Endothelial cell of umbilical vein (primary cell): ENCODE measurements at regions of chr3 and their contacts with region 1.

Region 1: DNA sequence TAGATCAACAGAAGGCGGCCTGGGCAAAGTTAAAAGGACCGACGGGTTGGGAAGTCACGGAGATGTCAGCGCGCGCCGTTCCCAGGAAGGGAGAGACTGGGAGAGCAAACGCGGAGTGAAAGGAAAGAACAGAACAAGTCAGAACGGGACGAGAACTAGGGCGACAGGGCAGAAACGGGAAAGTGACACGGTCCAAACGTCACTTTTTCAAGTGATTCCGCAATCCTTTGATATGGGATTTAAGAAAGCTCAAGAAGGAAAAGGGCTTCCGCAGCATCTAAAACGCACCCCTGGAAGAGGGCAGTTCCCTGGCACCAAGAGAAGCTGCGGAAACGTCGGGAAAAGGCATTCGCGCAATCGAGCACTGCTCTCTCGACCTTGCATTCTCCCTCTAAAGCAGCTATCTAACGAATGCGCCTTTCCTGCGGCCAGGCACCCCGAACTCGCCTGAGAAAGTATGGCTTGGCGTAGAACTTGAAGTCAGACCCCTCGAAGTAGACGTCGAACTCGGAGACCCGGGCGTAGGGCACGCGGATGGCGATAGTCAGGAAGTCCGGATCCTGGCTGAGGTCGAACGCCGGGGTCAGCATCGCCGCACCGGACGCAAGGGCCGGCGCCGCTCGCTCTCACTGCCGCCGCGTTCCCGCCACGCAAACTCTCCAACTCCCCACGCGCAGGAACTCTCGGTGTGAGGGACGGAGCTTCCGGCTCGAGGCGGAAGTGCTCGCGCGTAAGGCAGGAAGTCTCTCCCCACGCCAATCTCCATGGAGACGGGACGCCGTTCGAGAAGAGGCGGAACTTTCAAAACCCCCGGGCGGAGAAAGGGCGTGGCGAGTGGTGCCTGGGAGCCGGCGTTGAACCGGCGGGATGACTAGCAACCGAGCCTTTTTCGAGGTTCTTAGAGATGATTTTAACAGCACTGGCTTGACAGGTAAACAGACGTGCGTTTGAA is at the start of gene SHQ1:
- DNase-seq: peak; percentile 93
- H3K4me3 ChIP-seq: peak within 1 kb of the TSS; percentile 46 to 77 (median 76)
- H3K27ac ChIP-seq: peak within 1 kb of the TSS; percentile 4
- H3K4me1 ChIP-seq: peaks cover 16% of the 10 kb centered on the region
- H3K27me3 ChIP-seq: no peaks in the 10 kb centered on the region
- CTCF ChIP-seq: no peak
- POLR2A ChIP-seq: peak; percentile 67
- total RNA-seq, gene SHQ1: 19.7 and 20.6 TPM in 2 replicates

Region 2: GRCh38 chr3:72862314-72863090 is 14.5 kb after region 1 on chr3:
- CTCF ChIA-PET with region 1: interaction called, 14 read pairs
- POLR2A ChIA-PET with region 1: no interaction called
- dilution Hi-C with region 1: no loop called
- intact Hi-C with region 1: no loop called
- DNase-seq: no peak
- H3K4me3 ChIP-seq: no peak overlapping the region
- H3K27ac ChIP-seq: no peak overlapping the region
- H3K4me1 ChIP-seq: no peaks in the 10 kb centered on the region
- H3K27me3 ChIP-seq: peaks cover 2 to 5% of the 10 kb centered on the region in 2 experiments
- CTCF ChIP-seq: no peak
- POLR2A ChIP-seq: no peak

Region 3: DNA sequence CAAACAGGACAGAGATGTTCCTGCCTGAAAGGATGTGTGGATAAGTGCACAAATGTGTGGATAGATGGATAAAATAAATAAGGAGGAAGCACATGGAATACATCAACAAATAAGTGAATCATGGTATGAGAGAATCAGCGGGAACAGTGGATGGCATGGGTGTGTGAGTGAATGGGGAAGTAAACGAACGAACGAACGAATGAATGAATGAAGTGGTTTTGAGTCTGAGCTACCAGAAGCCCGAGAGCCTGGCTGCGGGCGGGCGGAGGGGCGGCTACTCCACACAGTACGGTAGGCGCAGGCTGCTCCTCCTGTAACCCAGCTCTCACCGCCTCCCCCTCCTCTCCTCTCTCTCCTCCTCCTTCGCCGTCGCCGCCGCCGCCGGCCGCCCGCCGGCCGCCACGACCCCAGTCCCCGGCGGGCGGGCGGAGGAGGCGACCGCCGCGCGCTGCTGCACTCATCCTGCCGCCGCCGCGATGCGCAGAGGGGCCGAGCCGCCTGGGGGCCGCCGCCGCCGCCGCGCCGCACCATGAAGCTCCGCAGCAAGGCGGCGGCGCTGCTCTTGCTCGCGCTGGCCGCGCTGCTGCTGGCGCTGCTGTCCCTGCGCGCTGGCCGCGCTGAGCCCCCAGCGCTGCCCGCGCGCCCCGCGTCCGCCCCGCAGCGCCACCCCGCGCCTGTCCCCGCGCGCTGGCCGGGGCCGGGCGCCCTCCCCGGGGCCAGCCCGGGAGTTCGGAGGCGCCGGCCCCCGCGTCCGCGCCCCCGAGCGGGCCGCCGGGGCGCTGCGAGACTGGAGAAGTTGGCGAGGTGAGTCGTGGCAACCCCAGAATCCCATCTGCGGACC is 39.9 kb after region 1 on chr3 and contains the start of gene GXYLT2:
- CTCF ChIA-PET with region 1: interaction called, 14 read pairs
- POLR2A ChIA-PET with region 1: no interaction called
- dilution Hi-C with region 1: no loop called
- intact Hi-C with region 1: no loop called
- DNase-seq: peak; percentile 34
- H3K4me3 ChIP-seq: peak within 1 kb of the TSS in 2 of 3 experiments; percentile 11 to 12
- H3K27ac ChIP-seq: no peak within 1 kb of the TSS
- H3K4me1 ChIP-seq: peaks cover 5% of the 10 kb centered on the region
- H3K27me3 ChIP-seq: peaks cover 38 to 49% of the 10 kb centered on the region in 2 experiments
- CTCF ChIP-seq: no peak
- POLR2A ChIP-seq: no peak
- total RNA-seq, gene GXYLT2: 0.14 and 0.24 TPM in 2 replicates

Region 4: DNA sequence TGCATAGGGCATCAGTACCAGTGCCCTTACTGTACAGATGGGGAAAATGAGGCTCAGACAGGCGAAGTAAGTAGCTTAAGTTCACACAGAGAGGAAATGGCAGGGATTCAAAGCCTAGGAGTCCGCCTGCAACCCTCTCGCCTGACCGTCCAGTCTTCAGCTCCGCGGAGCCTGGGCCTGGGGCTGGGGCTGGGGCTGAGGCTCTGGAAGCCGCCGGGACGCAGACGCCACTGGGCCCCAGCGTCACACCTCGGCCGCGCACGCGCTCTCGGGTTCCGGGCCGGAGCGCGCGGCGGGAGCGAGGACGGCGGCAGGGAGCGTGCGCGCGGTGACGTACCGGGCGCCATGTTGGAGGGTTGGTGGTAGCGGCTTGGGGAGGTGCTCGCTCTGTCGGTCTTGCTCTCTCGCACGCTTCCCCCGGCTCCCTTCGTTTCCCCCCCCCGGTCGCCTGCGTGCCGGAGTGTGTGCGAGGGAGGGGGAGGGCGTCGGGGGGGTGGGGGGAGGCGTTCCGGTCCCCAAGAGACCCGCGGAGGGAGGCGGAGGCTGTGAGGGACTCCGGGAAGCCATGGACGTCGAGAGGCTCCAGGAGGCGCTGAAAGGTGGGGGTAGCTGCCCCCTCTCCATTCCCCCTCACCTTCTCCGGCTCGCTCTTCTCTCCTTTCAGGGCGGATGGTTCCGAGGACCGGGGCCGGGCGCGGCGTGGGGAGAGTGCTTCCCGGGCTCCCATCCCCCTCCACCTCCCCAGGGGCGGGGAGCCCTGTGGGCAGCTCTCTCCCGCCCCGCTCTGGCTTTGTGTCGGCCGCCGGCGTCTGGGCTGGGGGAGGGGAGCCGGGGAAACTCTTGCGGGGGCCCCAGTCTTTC is 148.7 kb after region 1 on chr3 and contains the start of gene PPP4R2:
- CTCF ChIA-PET with region 1: interaction called, 10 read pairs
- POLR2A ChIA-PET with region 1: no interaction called
- dilution Hi-C with region 1: no loop called
- intact Hi-C with region 1: loop called (anchors 2 kb)
- DNase-seq: peak; percentile 87
- H3K4me3 ChIP-seq: peak within 1 kb of the TSS; percentile 69 to 97 (median 74)
- H3K27ac ChIP-seq: peak within 1 kb of the TSS; percentile 70
- H3K4me1 ChIP-seq: peaks cover 27% of the 10 kb centered on the region
- H3K27me3 ChIP-seq: no peaks in the 10 kb centered on the region
- CTCF ChIP-seq: no peak
- POLR2A ChIP-seq: peak; percentile 92
- total RNA-seq, gene PPP4R2: 74.4 and 75.4 TPM in 2 replicates

Region 5: DNA sequence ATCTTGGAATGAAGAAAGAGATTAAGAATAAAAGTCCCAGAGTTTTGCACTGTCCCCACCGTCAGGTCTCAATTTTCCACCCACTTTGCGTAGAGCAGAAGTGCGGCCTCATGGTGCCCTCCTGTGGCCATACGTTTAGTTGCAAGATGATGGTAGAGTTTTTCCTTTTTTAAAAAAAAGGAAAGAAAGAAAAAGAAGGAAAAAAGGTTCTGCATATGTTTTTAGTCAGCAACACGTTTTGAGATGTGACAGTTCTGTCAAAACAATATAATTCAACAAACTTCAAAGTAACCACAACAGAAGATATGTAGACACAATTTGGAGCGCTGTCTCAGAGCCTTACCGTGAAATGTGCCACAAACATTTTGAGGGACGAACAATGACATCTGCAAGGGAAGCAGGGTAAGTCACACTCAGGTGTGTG is 238.1 kb after region 1 on chr3:
- CTCF ChIA-PET with region 1: interaction called, 166 read pairs
- POLR2A ChIA-PET with region 1: interaction called, 3 read pairs
- dilution Hi-C with region 1: no loop called
- intact Hi-C with region 1: loop called (anchors 1 kb)
- DNase-seq: peak; percentile 44
- H3K4me3 ChIP-seq: no peak overlapping the region
- H3K27ac ChIP-seq: no peak overlapping the region
- H3K4me1 ChIP-seq: no peaks in the 10 kb centered on the region
- H3K27me3 ChIP-seq: no peaks in the 10 kb centered on the region
- CTCF ChIP-seq: peak; percentile 55 to 64
- POLR2A ChIP-seq: no peak